ENCODE measurements at regions of chr14 and their contacts with region 1.

Region 1: DNA sequence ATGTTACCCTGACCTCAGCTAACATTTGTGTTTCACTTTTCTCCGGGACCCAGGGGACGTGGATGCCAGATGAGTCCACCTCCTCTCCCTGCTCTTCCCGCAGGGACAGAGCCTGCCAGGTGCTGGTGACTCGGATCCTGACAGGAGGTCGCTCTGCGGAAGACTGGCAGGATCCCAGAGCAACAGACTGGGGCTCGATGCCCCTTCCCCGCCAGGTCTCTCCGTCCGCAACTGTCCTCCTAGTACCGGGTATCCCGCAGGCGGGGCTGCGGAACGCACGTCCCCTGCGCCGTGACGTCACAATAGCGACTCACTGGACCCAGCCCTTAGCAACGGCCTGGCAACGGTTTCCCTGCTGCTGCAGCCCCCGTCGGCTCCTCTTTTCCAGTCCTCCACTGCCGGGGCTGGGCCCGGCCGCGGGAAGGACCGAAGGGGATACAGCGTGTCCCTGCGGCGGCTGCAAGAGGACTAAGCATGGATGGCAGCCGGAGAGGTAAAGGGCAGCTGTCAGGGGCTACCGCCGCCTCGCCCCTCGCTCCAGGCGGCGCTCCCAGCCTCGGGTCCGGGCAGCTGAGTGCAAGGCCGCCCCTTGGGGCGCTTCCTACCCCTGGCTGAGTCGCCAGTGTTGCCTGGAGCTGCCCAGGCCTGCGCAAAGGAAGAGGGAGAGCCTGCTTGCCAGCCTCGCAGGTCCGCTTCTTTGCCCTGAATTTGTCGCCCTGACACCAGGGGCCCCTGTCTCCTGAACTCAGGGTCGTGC is at the start of gene SPATA7:
- DNase-seq: peak; percentile 99
- H3K4me3 ChIP-seq: peak within 1 kb of the TSS; percentile 78 to 85 (median 84)
- H3K27ac ChIP-seq: peak within 1 kb of the TSS; percentile 81 to 88 (median 84)
- H3K4me1 ChIP-seq: peaks cover 5 to 23% (median 20%) of the 10 kb centered on the region in 4 donors
- H3K27me3 ChIP-seq: no peaks in the 10 kb centered on the region
- CTCF ChIP-seq: no peak
- EP300 ChIP-seq: no peak
- POLR2A ChIP-seq: no peak
- total RNA-seq, gene SPATA7: 16.2 to 34.5 (median 20.4) TPM

Region 2: DNA sequence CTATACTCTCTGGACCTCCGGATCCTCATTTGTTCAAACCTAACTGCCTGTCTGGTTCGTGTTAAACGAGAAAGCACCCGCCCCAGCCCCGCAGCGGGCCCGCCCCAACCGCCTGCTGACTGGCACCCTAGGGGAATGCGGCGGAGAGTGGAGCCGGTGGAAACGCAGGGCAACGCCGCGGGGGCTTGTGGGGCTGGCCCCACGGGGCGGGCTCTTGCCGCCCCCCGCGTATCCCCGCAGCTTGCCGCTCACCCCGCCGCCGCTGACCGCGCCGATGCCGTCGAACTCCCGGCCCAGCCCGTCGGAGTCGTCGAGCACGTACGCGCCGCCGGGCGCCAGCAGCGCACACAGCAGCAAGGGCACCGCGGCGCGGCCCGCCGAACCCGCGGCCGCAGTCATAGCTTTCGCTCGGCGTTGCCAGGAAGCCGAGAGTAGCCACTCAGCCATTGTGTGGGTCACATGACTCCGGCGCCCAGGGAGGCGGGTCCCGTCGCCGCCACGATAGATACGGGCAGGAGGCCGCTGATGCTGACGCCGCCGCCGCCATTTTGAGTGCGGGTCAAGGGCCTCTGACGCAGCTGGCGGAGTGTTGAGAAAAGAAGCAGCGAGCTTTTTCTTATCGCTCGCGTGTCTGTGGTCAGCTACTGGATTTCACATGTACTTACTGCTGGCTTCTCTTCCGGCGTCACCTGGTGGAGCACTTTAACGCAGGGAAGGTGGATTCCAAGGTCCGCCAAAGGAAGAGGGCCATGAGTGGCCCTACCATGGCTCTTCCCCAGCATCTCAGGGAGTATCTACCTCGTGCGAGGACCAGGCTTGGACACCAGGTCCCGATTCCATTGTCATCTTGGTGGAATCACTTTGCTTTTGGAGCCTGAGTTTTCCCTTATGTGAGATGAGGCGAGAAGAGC is 392.6 kb before region 1 on chr14 and contains the start of gene GALC:
- intact Hi-C with region 1: loop called (anchors 10 kb)
- DNase-seq: peak; percentile 99
- H3K4me3 ChIP-seq: peak within 1 kb of the TSS; percentile 72 to 94 (median 86)
- H3K27ac ChIP-seq: peak within 1 kb of the TSS; percentile 91 to 98 (median 96)
- H3K4me1 ChIP-seq: peaks cover 16 to 30% (median 22%) of the 10 kb centered on the region in 4 donors
- H3K27me3 ChIP-seq: no peaks in the 10 kb centered on the region
- CTCF ChIP-seq: no peak
- EP300 ChIP-seq: no peak
- POLR2A ChIP-seq: no peak
- total RNA-seq, gene GALC: 14.5 to 17.0 (median 16.0) TPM

Region 3: GRCh38 chr14:88439088-88439487 is 53.6 kb after region 1 on chr14:
- intact Hi-C with region 1: no loop called
- DNase-seq: no peak
- H3K4me3 ChIP-seq: no peak overlapping the region
- H3K27ac ChIP-seq: no peak overlapping the region
- H3K4me1 ChIP-seq: no peaks in the 10 kb centered on the region
- H3K27me3 ChIP-seq: no peaks in the 10 kb centered on the region
- CTCF ChIP-seq: no peak
- EP300 ChIP-seq: no peak
- POLR2A ChIP-seq: no peak

Region 4: DNA sequence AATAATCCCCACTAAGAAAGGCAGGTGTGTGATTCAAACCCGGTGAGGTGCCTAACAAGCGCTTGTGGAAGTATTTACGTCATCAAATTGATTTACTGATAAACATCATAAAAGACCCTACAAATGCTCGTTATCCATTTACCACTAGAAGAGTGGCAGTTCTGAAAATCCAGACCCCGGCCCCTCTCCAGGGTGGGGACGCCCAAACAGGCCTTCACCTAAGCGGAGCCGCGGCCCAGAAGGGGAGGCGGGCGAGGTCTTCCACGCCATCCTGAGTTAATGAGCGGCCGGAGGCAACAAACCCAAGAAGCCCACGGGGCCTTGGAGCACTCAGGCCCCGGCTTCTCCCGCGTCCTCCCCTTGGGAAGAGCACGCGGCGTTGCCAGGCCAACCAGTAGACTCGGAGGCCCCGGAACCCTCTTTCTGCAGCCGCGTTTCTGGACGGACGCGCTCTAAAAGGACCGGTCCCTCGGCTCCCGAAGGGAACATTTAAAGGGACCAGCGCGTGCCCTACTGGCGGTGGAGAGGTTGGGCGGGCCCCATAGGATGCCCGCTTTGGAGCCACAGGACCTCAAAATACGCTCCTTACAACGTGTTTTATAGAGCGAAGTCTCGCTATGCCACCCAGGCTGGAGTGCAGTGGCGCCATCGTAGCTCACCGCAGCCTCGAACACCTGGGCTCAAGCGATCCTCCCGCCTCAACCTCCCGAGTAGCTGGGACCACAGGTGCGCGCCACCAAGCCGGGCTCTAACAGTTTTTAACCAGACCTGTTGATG is 165.8 kb after region 1 on chr14:
- intact Hi-C with region 1: loop called (anchors 10 kb)
- DNase-seq: no peak
- H3K4me3 ChIP-seq: peak overlapping the region; percentile 64 to 83 (median 70)
- H3K27ac ChIP-seq: peak overlapping the region; percentile 81 to 90 (median 82)
- H3K4me1 ChIP-seq: peaks cover 39 to 72% (median 58%) of the 10 kb centered on the region in 4 donors
- H3K27me3 ChIP-seq: no peaks in the 10 kb centered on the region
- CTCF ChIP-seq: peak; percentile 45 to 57 (median 50)
- EP300 ChIP-seq: no peak
- POLR2A ChIP-seq: no peak